ENCODE measurements at regions of chr4 and their contacts with region 1.

Region 1: DNA sequence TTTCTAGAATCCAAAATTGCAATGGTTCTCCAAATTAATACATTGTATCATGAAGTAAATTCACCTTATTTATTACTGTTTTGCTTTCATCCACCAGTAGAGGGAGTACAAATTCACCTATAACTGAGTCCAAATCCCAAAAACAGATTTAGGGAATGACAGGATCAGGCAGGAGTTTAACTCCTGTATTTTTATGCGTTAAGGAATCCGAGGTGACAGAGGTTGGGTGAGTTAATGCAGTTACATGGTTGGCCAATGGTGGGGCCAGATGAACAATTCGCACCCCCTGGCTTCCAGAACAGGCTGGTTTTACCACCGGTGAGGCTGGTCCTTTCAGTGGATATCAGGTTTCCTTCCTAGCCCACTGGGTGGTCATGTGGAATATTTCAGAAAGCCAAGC is 82.4 kb downstream of the MTNR1A start:
- DNase-seq: no peak
- ATAC-seq: no peak
- H3K4me3 ChIP-seq: no peak overlapping the region
- H3K27ac ChIP-seq: no peak overlapping the region
- H3K4me1 ChIP-seq: no peaks in the 10 kb centered on the region
- H3K27me3 ChIP-seq: no peaks in the 10 kb centered on the region
- CTCF ChIP-seq: peak; percentile 27 to 69 (median 49)
- POLR2A ChIP-seq: no peak

Region 2: DNA sequence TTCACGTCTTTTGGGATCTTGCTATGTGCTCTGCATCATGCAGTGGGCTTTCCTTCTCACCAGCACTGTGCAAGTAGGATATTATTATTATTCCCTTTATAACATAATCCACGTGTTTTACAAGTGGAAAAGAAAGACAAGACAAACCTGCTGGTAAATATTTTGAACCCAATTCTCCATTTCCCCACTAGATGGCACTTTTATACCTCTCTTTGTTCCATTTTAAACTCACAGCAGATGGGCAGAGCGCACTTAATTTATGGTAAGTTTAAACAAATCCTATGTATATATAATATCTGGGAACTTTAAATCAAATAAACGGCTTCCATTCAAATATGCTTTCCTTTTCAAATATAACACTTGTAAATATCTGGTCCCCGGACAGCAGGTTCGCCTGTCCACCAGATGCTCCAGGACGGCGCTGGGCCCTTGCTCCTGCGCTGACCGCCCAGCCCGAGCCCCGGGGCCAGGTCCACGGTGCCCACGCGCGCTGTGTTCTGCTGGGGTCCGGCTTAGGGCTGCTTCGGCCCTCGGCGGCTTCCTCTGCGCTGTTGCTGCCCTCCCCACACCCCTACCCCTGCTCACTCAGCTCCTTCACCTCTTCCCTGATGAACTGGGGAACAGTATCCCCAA is 175.8 kb before region 1 on chr4:
- intact Hi-C with region 1: loop called in 1 of 10 experiments (anchors 10 kb)
- DNase-seq: no peak
- ATAC-seq: no peak
- H3K4me3 ChIP-seq: no peak overlapping the region
- H3K27ac ChIP-seq: no peak overlapping the region
- H3K4me1 ChIP-seq: peaks cover 0 to 4% (median 0%) of the 10 kb centered on the region in 12 donors
- H3K27me3 ChIP-seq: peaks cover 3 to 44% (median 20%) of the 10 kb centered on the region in 9 donors
- CTCF ChIP-seq: peak; percentile 47 to 72 (median 63)
- POLR2A ChIP-seq: no peak

Region 3: DNA sequence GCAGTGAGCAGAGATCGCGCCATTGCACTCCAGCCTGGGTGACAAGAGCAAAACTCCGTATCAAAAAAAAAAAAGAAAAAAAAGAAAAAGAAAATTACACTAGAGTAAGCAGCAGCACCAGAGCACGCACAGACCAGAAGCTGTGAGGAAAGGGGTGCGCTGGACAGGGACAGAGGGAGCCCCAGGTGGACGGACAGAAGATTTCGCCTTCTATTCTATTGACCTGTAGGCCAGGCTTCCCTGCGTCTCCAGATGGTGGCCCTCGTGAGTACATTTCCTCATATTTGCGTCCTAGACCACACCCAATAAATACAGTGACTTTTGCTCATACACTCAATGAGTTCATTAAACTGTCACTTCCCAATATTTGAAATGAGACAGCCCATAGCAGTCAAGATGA is 63.3 kb after region 1 on chr4:
- intact Hi-C with region 1: no loop called
- DNase-seq: no peak
- ATAC-seq: no peak
- H3K4me3 ChIP-seq: no peak overlapping the region
- H3K27ac ChIP-seq: no peak overlapping the region
- H3K4me1 ChIP-seq: no peaks in the 10 kb centered on the region
- H3K27me3 ChIP-seq: no peaks in the 10 kb centered on the region
- CTCF ChIP-seq: no peak
- POLR2A ChIP-seq: no peak

Region 4: DNA sequence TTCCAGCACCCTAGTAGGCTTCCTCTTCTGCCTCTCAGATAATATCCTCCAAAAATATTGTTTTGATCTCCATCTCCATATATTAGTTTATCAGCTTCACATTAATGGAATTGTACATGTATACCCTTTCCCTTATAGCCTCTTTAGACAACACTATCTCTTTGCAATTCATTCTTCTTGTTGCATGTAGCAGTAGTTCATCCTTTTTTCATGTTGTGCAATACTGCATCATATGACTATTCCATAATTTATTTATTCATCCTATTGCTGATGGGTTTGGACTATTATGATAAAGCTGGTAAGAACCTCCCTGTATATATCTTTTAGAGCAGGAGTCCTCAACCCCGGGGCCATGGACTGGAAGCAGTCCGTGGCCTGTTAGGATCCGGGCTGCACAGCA is 398.9 kb after region 1 on chr4:
- intact Hi-C with region 1: no loop called
- DNase-seq: no peak
- ATAC-seq: no peak
- H3K4me3 ChIP-seq: no peak overlapping the region
- H3K27ac ChIP-seq: no peak overlapping the region
- H3K4me1 ChIP-seq: no peaks in the 10 kb centered on the region
- H3K27me3 ChIP-seq: no peaks in the 10 kb centered on the region
- CTCF ChIP-seq: no peak
- POLR2A ChIP-seq: no peak

Measured in heart left ventricle (tissue), 16 donors.